ENCODE measurements at regions of chr11 and their contacts with region 1.

Region 1: DNA sequence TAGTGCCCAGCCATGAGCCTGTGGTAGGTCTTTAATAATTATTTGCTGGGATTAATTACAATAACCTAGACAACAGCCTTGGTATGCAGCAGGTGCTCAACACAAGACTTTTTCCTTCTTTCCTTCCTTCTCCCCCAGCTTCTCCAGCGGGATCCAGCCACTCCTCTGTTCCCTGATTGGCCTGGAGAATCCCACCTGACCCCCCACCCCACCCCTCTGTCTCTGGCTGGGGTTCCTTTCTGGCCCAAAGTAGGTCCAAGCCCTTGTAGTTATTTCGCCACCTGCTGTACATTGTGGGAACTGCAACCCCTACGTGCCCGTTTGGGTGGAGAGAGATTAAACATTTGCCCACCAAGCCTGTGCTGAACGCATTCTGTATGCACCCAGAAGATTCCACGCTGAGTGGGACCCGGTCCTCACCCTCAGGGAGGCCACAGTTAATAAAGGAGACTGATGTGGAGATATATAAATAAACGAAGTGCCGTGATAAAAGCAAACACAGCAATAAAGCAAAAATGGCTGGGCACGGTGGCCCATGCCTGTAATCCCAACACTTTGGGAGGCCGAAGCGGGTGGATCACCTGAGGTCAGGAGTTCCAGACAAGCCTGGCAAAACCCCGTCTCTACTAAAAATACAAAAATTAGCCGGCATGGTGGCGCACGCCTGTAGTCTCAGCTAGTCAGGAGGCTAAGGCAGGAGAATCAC is 32.1 kb upstream of the DGKZ start:
- DNase-seq: peak; percentile 67 to 91 (median 85)
- H3K4me3 ChIP-seq: no peak overlapping the region
- H3K27ac ChIP-seq: no peak overlapping the region
- H3K4me1 ChIP-seq: no peaks in the 10 kb centered on the region
- H3K27me3 ChIP-seq: no peaks in the 10 kb centered on the region
- CTCF ChIP-seq: peak; percentile 79 to 97 (median 88)
- POLR2A ChIP-seq: no peak

Region 2: GRCh38 chr11:45964911-45965389 is 350.2 kb before region 1 on chr11:
- intact Hi-C with region 1: no loop called
- DNase-seq: peak; percentile 63 to 87 (median 66)
- H3K4me3 ChIP-seq: no peak overlapping the region
- H3K27ac ChIP-seq: peak overlapping the region in 3 of 5 donors; percentile 38 to 45 (median 43)
- H3K4me1 ChIP-seq: peaks cover 17 to 20% of the 10 kb centered on the region in 2 donors
- H3K27me3 ChIP-seq: no peaks in the 10 kb centered on the region
- CTCF ChIP-seq: peak; percentile 85 to 95 (median 92)
- POLR2A ChIP-seq: no peak

Region 3: DNA sequence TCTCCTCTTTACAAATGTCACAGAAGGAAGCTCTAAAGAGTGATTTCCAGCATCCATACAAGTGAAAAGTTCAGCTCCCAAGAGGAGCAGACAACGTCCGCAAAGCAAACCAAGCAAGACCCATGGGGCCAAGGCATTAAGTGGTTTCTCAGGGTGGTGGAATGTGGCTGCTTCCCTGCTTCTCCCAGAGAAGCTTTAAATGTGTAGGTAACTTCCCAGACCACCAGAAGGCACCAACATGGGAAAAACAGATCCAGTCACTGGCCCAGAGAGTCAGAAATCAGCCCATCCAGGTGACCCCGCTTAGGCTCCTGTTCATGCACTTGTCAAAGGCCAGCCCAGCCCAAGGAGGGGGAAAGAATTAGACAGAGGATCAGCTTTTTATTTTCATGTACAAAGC is 180.6 kb before region 1 on chr11:
- intact Hi-C with region 1: loop called in 1 of 2 experiments (anchors 10 kb)
- DNase-seq: no peak
- H3K4me3 ChIP-seq: no peak overlapping the region
- H3K27ac ChIP-seq: no peak overlapping the region
- H3K4me1 ChIP-seq: no peaks in the 10 kb centered on the region
- H3K27me3 ChIP-seq: no peaks in the 10 kb centered on the region
- CTCF ChIP-seq: no peak
- POLR2A ChIP-seq: no peak

Measured in adrenal gland (tissue), 19 donors.